PC-9 (cell line): ENCODE measurements at regions of chr1 and their contacts with region 1.

Region 1: GRCh38 chr1:42658880-42659337 is 686 bp downstream of the PPIH start:
- DNase-seq: no peak
- H3K4me3 ChIP-seq: peak overlapping the region; percentile 76
- H3K27ac ChIP-seq: peak overlapping the region; percentile 64
- H3K4me1 ChIP-seq: peaks cover 19% of the 10 kb centered on the region
- H3K27me3 ChIP-seq: no peaks in the 10 kb centered on the region
- CTCF ChIP-seq: no peak

Region 2: GRCh38 chr1:42469727-42470126 is 189.2 kb before region 1 on chr1:
- CTCF ChIA-PET with region 1: no interaction called
- POLR2A ChIA-PET with region 1: no interaction called
- intact Hi-C with region 1: no loop called
- DNase-seq: no peak
- H3K4me3 ChIP-seq: no peak overlapping the region
- H3K27ac ChIP-seq: no peak overlapping the region
- H3K4me1 ChIP-seq: no peaks in the 10 kb centered on the region
- H3K27me3 ChIP-seq: no peaks in the 10 kb centered on the region
- CTCF ChIP-seq: no peak

Region 3: DNA sequence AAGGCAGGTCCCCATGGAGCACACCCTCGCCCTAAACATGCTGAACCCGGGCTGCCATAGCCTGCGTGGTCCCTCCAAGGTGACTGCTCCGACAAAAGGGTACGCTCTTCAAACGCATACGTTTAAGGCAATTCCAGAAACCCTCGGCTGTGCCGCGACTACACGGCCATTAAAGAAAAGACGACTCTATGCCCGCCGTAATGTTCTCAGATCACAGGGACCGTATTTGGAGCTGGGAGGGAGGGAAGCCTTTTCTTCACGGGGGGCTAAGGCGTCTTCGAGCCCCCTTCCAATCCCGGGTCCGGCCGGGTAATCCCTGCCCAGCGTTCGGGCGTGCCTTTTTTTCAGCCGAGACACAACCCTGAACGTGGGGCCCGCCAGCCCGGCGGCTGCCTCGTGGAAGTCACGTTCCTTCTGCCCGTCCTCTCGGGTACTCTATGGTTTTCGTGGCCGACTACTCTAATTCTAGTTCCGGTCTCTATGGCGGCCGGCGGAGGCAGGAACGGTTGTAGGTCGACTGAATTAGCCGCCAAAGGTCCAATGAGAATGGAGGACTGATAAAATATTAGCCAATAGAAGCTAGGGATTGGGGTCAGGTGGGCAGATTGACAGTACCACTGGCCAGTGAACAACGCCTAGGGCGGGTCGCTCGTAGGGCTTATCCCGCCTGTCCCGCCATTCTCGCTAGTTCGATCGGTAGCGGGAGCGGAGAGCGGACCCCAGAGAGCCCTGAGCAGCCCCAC is 23.0 kb after region 1 on chr1 and contains the start of gene YBX1:
- CTCF ChIA-PET with region 1: interaction called, 4 read pairs
- POLR2A ChIA-PET with region 1: interaction called, 5 read pairs
- intact Hi-C with region 1: loop called (anchors 1 kb)
- DNase-seq: peak; percentile 96 to 98
- H3K4me3 ChIP-seq: peak within 1 kb of the TSS; percentile 93
- H3K27ac ChIP-seq: peak within 1 kb of the TSS; percentile 79
- H3K4me1 ChIP-seq: peaks cover 41% of the 10 kb centered on the region
- H3K27me3 ChIP-seq: no peaks in the 10 kb centered on the region
- CTCF ChIP-seq: no peak
- total RNA-seq, gene YBX1: 656 and 1,130 TPM in 2 replicates